ENCODE measurements at regions of chr15 and their contacts with region 1.

Region 1: GRCh38 chr15:75684642-75685041 is 28.0 kb downstream of the CSPG4 start:
- DNase-seq: no peak
- H3K4me3 ChIP-seq: no peak overlapping the region
- H3K27ac ChIP-seq: no peak overlapping the region
- H3K4me1 ChIP-seq: peaks cover 18% of the 10 kb centered on the region
- H3K27me3 ChIP-seq: no peaks in the 10 kb centered on the region
- CTCF ChIP-seq: no peak
- POLR2A ChIP-seq: no peak

Region 2: DNA sequence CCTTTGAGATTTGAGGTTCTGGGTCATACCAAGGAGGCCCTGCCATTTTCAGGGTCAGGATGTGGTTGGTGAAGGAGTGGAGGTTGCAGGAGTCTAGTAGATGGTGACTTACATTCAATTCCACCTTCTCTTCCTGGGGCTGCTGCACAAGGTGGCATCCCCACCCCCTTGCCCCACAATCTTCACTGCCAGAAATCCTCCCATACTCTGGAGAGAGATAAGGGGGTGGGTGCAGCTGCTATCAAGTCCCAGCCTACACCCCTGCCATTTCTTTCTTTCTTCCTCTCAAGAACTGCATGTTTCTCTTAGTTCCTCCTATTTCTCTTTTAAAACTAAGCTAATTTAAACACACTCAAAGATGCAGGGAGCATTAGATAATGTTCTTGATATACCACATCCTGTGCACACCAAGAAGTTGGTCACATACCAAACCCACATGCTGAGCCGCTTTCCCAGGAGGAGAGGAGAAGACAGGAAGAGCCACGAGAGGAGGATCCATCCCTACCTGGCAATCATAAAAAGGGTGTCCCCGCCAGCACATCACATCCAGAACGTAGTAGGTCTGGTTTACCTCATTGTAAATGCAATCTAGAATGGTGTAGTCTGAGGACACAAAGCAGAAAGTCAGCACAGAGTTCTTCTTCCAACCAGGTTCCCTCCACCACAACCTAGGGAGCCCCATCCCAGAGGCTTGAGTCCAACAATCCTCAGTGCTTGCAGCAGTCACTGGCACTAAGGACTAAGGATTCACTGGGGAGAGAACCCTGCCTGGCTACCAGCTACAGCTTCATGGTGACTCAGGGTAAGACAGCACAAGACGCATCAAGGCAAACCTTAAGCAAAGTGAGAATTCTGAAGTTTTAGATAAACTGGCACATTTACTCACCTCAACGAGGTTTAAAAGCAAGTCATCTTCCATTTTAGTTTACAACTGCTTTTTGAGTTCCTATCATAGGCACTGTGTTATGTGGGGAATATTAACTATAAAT is 77.6 kb before region 1 on chr15:
- intact Hi-C with region 1: no loop called
- DNase-seq: no peak
- H3K4me3 ChIP-seq: no peak overlapping the region
- H3K27ac ChIP-seq: no peak overlapping the region
- H3K4me1 ChIP-seq: no peaks in the 10 kb centered on the region
- H3K27me3 ChIP-seq: no peaks in the 10 kb centered on the region
- CTCF ChIP-seq: no peak
- POLR2A ChIP-seq: no peak

Region 3: GRCh38 chr15:75732809-75733451 is 48.3 kb after region 1 on chr15:
- intact Hi-C with region 1: loop called (anchors 5 kb)
- DNase-seq: no peak
- H3K4me3 ChIP-seq: no peak overlapping the region
- H3K27ac ChIP-seq: peak overlapping the region; percentile 72
- H3K4me1 ChIP-seq: peaks cover 32% of the 10 kb centered on the region
- H3K27me3 ChIP-seq: no peaks in the 10 kb centered on the region
- CTCF ChIP-seq: peak; percentile 61 to 88 (median 69)
- POLR2A ChIP-seq: no peak

Region 4: GRCh38 chr15:75758071-75758872 is 73.6 kb after region 1 on chr15:
- intact Hi-C with region 1: no loop called
- DNase-seq: no peak
- H3K4me3 ChIP-seq: peak overlapping the region; percentile 55 to 63
- H3K27ac ChIP-seq: peak overlapping the region; percentile 83
- H3K4me1 ChIP-seq: peaks cover 6% of the 10 kb centered on the region
- H3K27me3 ChIP-seq: no peaks in the 10 kb centered on the region
- CTCF ChIP-seq: no peak
- POLR2A ChIP-seq: no peak

Region 5: DNA sequence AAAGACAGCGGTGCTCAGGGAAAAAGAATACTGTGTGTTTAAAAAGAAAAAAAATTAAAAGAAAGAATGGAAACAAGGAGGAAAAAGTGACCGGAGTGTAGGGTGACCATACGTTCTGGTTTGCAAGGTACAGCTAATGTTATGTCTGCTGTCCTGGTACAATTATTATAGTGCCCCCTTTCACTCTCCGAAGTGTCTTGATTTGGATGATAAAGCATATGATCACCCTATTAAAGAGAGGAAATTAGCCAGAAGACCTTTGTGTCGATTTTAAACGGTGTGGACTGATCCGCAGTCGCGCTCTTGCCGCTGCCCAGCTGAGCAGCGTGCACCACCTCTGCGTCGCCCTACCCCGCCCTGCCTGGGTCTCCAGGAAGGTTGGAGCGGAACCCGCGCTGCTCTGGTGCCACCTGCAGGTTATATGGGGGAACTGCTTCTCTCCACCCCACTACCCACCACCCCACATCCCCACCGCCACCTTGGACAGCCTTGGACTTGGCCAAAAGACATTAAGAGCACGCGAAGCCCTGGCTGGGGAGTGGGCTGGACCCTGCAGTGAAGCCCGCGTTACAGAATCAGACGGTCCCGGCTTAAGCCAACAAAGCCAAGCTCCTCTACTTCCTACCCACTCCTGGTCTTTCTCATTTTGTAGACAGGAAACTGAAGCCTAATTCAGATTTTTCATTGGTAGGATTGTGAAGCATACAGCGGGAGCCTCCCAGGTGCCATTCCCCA is 117.4 kb after region 1 on chr15:
- intact Hi-C with region 1: loop called (anchors 10 kb)
- DNase-seq: peak in 1 of 2 donors; percentile 84
- H3K4me3 ChIP-seq: peak overlapping the region; percentile 26 to 47
- H3K27ac ChIP-seq: no peak overlapping the region
- H3K4me1 ChIP-seq: peaks cover 7% of the 10 kb centered on the region
- H3K27me3 ChIP-seq: no peaks in the 10 kb centered on the region
- CTCF ChIP-seq: peak; percentile 28 to 87 (median 67)
- POLR2A ChIP-seq: no peak